ENCODE measurements at regions of chr6 and their contacts with region 1.

Region 1: GRCh38 chr6:33425668-33426577 is 6.1 kb downstream of the SYNGAP1 start:
- DNase-seq: peak; percentile 56 to 92
- H3K4me3 ChIP-seq: peak overlapping the region; percentile 53 to 79
- H3K27ac ChIP-seq: peak overlapping the region; percentile 92 to 95
- H3K4me1 ChIP-seq: peaks cover 17 to 23% of the 10 kb centered on the region in 2 donors
- H3K27me3 ChIP-seq: no peaks in the 10 kb centered on the region
- CTCF ChIP-seq: peak; percentile 27 to 74 (median 63)

Region 2: GRCh38 chr6:33410050-33410710 is 15.7 kb before region 1 on chr6:
- intact Hi-C with region 1: loop called (anchors 1 kb)
- DNase-seq: peak; percentile 89 to 98
- H3K4me3 ChIP-seq: peak overlapping the region; percentile 84 to 98
- H3K27ac ChIP-seq: peak overlapping the region; percentile 96 to 99
- H3K4me1 ChIP-seq: peaks cover 10% of the 10 kb centered on the region in 2 donors
- H3K27me3 ChIP-seq: no peaks in the 10 kb centered on the region
- CTCF ChIP-seq: no peak